CD8-positive, alpha-beta T cell (primary cell): ENCODE measurements at regions of chr14 and their contacts with region 1.

Region 1: DNA sequence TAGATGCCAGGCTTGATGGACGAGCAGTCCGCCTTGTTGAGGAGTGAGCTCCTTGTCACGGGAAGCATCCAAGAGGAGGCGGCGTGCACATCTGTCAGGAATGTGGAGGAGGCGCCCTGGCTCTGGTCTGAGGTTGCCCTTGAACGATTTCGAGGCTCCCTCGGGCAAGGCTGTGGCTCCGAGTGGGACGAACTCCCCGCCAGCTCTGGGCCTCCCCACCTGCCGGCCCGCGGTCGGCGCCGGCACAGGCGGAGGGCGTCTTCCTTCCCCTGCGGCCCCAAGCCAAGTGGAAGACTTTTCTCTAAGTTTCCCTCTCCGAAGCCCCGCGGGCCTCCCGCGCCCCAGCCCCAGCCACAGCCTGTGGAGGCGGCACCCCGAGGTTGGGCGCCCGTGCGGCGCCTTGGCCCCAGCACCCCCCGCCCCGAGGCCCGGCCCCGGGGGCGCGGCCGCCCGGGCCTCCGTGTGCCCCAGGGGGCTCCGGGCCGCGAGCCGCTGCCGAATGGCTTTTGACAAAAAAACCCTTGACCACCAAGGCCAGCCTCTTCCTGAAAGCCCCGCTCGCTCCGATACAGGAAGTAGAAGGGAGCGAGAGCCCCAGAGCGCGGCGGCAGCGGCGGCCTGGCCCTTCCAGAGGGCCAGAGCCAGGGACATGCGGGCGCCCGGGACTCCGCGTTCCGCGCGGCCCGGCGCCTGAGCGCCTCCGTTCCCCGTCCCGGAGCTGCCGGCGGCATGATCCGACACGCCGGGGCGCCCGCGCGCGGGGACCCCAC is at the start of gene RIN3:
- DNase-seq: peak in 8 of 9 experiments; percentile 21 to 75 (median 54)
- ATAC-seq: peak; percentile 49
- H3K4me3 ChIP-seq: peak within 1 kb of the TSS; percentile 86 to 93
- H3K4me3 Mint-ChIP-seq: peak within 1 kb of the TSS; percentile 66
- H3K27ac ChIP-seq: peak within 1 kb of the TSS; percentile 71 to 79
- H3K27ac Mint-ChIP-seq: peak within 1 kb of the TSS; percentile 86
- H3K4me1 ChIP-seq: peaks cover 50% of the 10 kb centered on the region
- H3K4me1 Mint-ChIP-seq: peaks cover 47% of the 10 kb centered on the region
- H3K27me3 ChIP-seq: no peaks in the 10 kb centered on the region
- H3K27me3 Mint-ChIP-seq: no peaks in the 10 kb centered on the region
- CTCF ChIP-seq: no peak
- total RNA-seq, gene RIN3: 82.4 to 82.7 TPM

Region 2: DNA sequence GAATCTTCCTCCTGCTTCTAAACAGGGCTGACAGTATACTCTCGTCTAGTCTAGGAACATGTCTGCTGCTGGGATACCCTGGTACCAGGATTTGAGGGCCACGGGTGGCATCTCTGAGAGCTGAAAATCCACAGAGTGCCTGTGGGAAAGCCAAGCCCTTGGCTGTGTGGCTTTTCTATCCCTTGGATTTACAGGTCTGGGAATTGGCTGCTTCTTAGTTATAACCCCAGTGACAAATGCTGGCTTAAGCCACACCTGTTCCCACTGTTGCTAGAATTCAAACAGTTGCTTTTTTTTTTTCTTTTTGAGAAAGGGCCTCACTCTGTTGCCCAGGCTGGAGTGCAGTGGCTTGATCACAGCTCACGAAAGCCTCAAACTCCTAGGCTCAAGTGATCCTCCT is 14.2 kb before region 1 on chr14:
- CTCF ChIA-PET with region 1: no interaction called
- POLR2A ChIA-PET with region 1: no interaction called
- intact Hi-C with region 1: no loop called
- DNase-seq: peak in 1 of 9 experiments; percentile 27
- ATAC-seq: no peak
- H3K4me3 ChIP-seq: no peak overlapping the region
- H3K4me3 Mint-ChIP-seq: no peak overlapping the region
- H3K27ac ChIP-seq: no peak overlapping the region
- H3K27ac Mint-ChIP-seq: no peak overlapping the region
- H3K4me1 ChIP-seq: no peaks in the 10 kb centered on the region
- H3K4me1 Mint-ChIP-seq: no peaks in the 10 kb centered on the region
- H3K27me3 ChIP-seq: no peaks in the 10 kb centered on the region
- H3K27me3 Mint-ChIP-seq: no peaks in the 10 kb centered on the region
- CTCF ChIP-seq: no peak

Region 3: DNA sequence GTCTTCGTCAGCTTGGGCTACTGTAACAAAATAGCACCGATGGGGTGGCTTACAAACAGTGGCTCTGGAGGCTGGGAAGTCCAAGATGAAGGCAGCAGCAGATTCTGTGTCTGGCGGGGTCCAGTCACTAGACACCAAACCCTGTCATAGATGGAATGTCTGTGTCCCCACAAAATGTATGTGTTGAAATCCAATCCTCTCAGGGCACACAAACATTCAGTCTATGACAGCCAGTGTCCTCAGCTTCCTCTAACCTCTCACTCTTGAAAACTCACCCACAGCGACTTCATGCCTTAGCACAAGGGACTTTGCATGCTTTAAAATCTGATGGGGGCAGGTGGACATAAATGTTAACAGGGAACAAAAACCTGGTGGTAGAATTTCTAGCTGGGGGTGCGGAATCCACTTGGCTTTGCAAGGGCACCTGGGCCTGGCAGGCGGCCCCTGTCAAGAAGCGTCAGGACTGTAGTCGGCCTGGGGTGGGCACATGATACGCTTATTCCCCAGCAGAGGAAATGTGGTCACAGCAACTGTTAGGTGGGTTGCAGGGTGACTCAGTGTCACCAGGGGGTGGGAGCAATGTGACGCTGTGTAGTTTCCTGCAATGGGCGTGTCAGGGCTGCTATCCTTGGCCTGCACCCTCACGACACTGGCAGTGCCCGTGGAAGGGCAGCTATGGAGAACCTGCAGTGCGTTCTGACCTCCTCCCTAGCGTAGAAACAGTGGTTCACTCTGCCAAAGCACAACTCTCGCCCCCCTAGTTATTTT is 17.9 kb after region 1 on chr14:
- CTCF ChIA-PET with region 1: no interaction called
- POLR2A ChIA-PET with region 1: interaction called, 4 read pairs
- intact Hi-C with region 1: loop called (anchors 1 kb)
- DNase-seq: peak; percentile 65 to 98 (median 84)
- ATAC-seq: peak; percentile 85
- H3K4me3 ChIP-seq: peak overlapping the region in 1 of 2 experiments; percentile 15
- H3K4me3 Mint-ChIP-seq: peak overlapping the region; percentile 67
- H3K27ac ChIP-seq: peak overlapping the region; percentile 55 to 97
- H3K27ac Mint-ChIP-seq: peak overlapping the region; percentile 99
- H3K4me1 ChIP-seq: peaks cover 65% of the 10 kb centered on the region
- H3K4me1 Mint-ChIP-seq: peaks cover 75% of the 10 kb centered on the region
- H3K27me3 ChIP-seq: no peaks in the 10 kb centered on the region
- H3K27me3 Mint-ChIP-seq: no peaks in the 10 kb centered on the region
- CTCF ChIP-seq: no peak

Region 4: GRCh38 chr14:92551044-92551841 is 37.9 kb after region 1 on chr14:
- CTCF ChIA-PET with region 1: interaction called, 3 read pairs
- POLR2A ChIA-PET with region 1: interaction called, 4 read pairs
- intact Hi-C with region 1: loop called in 1 of 2 experiments (anchors 5 kb)
- DNase-seq: peak in 2 of 9 experiments; percentile 67 to 82
- ATAC-seq: peak; percentile 57
- H3K4me3 ChIP-seq: no peak overlapping the region
- H3K4me3 Mint-ChIP-seq: no peak overlapping the region
- H3K27ac ChIP-seq: peak overlapping the region in 1 of 2 experiments; percentile 27
- H3K27ac Mint-ChIP-seq: peak overlapping the region; percentile 50
- H3K4me1 ChIP-seq: peaks cover 59% of the 10 kb centered on the region
- H3K4me1 Mint-ChIP-seq: peaks cover 74% of the 10 kb centered on the region
- H3K27me3 ChIP-seq: no peaks in the 10 kb centered on the region
- H3K27me3 Mint-ChIP-seq: no peaks in the 10 kb centered on the region
- CTCF ChIP-seq: peak; percentile 35

Region 5: DNA sequence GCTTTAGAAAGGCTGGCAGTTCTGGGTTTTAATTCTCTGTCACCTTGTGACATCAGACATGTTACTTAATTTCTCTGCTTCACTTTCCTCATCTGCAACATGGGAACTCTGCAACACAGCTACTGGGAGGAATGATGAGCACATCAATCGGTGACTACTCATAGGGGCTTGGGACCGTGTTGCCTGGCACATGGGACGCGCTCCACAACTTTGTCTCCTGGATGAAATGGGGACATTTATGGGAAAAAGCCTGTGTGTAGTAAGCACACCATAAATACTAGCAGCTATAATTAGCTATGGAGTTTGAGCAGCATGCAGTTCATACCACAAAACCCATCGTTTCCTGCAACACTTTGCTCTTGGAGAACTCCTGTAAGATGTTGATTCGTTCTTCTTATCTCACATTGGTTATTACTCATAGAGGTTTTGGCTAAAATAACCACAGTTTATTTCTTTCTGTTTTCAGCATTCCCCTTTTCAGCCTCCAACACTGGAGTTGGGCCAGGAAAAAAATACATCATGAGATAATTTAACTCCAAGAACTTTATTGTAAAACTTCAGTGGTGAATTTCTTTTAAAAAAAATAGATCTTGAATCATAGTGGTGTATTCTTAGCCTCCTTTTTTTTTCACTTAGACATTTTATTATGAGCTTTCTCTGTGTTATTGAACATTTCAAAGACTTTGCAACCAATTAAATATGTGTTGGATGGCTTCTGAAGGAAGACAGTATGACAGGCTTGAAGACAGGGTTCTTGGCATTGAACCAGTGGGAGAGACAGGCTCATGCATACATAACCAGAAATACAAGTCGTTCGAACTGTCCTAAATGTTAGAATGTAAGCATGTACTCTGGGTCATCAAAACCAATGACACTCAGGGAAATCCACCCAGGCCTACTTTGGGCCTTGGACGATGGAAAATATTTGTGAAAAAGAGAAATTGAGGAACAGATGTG is 72.9 kb after region 1 on chr14:
- CTCF ChIA-PET with region 1: interaction called, 3 read pairs
- POLR2A ChIA-PET with region 1: interaction called, 11 read pairs
- intact Hi-C with region 1: loop called (anchors 1 to 2 kb)
- DNase-seq: peak in 7 of 9 experiments; percentile 26 to 90 (median 62)
- ATAC-seq: peak; percentile 75
- H3K4me3 ChIP-seq: peak overlapping the region; percentile 9 to 38
- H3K4me3 Mint-ChIP-seq: peak overlapping the region; percentile 74
- H3K27ac ChIP-seq: peak overlapping the region; percentile 22 to 85
- H3K27ac Mint-ChIP-seq: peak overlapping the region; percentile 95
- H3K4me1 ChIP-seq: peaks cover 98% of the 10 kb centered on the region
- H3K4me1 Mint-ChIP-seq: peaks cover 97% of the 10 kb centered on the region
- H3K27me3 ChIP-seq: no peaks in the 10 kb centered on the region
- H3K27me3 Mint-ChIP-seq: no peaks in the 10 kb centered on the region
- CTCF ChIP-seq: no peak

Region 6: GRCh38 chr14:92651106-92651757 is 137.8 kb after region 1 on chr14:
- CTCF ChIA-PET with region 1: interaction called, 5 read pairs
- POLR2A ChIA-PET with region 1: no interaction called
- intact Hi-C with region 1: loop called in 1 of 2 experiments (anchors 10 kb)
- DNase-seq: peak; percentile 56 to 96 (median 84)
- ATAC-seq: peak; percentile 82
- H3K4me3 ChIP-seq: peak overlapping the region; percentile 77 to 91
- H3K4me3 Mint-ChIP-seq: peak overlapping the region; percentile 98
- H3K27ac ChIP-seq: peak overlapping the region; percentile 77 to 95
- H3K27ac Mint-ChIP-seq: peak overlapping the region; percentile 100
- H3K4me1 ChIP-seq: peaks cover 61% of the 10 kb centered on the region
- H3K4me1 Mint-ChIP-seq: peaks cover 76% of the 10 kb centered on the region
- H3K27me3 ChIP-seq: no peaks in the 10 kb centered on the region
- H3K27me3 Mint-ChIP-seq: no peaks in the 10 kb centered on the region
- CTCF ChIP-seq: no peak

Region 7: DNA sequence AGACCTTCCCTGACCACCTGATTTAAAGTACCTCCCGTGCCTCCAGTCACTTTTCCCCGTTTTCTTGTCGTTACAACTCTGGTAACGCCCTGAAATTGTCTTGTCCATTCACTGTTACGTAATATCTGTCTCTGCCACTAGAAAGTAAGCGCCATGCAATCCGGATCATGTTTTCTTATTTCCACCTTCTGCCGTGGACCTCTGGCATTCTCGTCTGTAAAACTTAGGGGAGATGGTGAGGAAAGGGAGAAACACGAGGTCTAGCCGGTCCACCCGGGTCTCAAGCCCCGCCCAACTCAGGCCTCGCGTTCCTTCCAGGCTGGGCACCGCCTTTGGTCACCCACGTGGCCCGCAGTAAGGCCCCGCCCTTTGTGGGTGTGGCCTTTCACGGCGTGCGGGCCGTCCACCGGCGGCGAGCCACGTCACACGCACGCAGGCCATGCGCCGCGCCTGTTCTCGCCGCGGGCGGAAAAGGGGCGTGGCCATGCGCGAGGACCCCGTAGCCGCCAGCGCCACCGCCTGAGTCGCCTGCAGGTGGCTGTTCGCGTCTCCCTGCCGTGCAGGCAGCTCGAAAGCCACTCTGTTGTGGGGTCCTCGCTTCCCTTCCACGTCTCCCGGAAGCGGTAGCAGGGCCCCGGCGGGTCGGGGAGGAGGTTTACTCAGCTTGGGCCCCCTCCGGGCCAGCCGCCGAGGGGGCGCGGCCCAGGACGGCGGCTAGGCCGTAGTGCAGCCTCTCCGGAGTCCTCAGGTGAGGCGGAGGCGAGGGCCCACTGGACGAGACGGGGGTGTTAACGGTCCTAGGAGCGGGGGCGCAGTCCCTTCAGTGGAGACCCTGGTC is 280.5 kb after region 1 on chr14 and contains the start of gene GOLGA5:
- CTCF ChIA-PET with region 1: no interaction called
- POLR2A ChIA-PET with region 1: no interaction called
- intact Hi-C with region 1: loop called in 1 of 2 experiments (anchors 10 kb)
- DNase-seq: peak; percentile 97 to 99 (median 98)
- ATAC-seq: peak; percentile 94
- H3K4me3 ChIP-seq: peak within 1 kb of the TSS; percentile 92 to 99
- H3K4me3 Mint-ChIP-seq: peak within 1 kb of the TSS; percentile 97
- H3K27ac ChIP-seq: peak within 1 kb of the TSS; percentile 88 to 92
- H3K27ac Mint-ChIP-seq: peak within 1 kb of the TSS; percentile 97
- H3K4me1 ChIP-seq: peaks cover 27% of the 10 kb centered on the region
- H3K4me1 Mint-ChIP-seq: peaks cover 38% of the 10 kb centered on the region
- H3K27me3 ChIP-seq: no peaks in the 10 kb centered on the region
- H3K27me3 Mint-ChIP-seq: no peaks in the 10 kb centered on the region
- CTCF ChIP-seq: no peak
- total RNA-seq, gene GOLGA5: 4.5 to 5.9 TPM